ENCODE measurements at regions of chr10 and their contacts with region 1.

Region 1: GRCh38 chr10:4512671-4513240 is 313.3 kb upstream of the AKR1E2 start:
- DNase-seq: peak; percentile 70
- H3K4me3 ChIP-seq: no peak overlapping the region
- H3K27ac ChIP-seq: no peak overlapping the region
- H3K4me1 ChIP-seq: peaks cover 5% of the 10 kb centered on the region
- H3K27me3 ChIP-seq: no peaks in the 10 kb centered on the region
- CTCF ChIP-seq: peak; percentile 79 to 85

Region 2: GRCh38 chr10:3197348-3198003 is 1315.3 kb before region 1 on chr10:
- CTCF ChIA-PET with region 1: no interaction called
- dilution Hi-C with region 1: no loop called
- in situ Hi-C with region 1: no loop called
- intact Hi-C with region 1: loop called (anchors 10 kb)
- DNase-seq: peak; percentile 77
- H3K4me3 ChIP-seq: peak overlapping the region; percentile 28 to 45 (median 30)
- H3K27ac ChIP-seq: no peak overlapping the region
- H3K4me1 ChIP-seq: peaks cover 16% of the 10 kb centered on the region
- H3K27me3 ChIP-seq: peaks cover 12% of the 10 kb centered on the region
- CTCF ChIP-seq: peak; percentile 71 to 98

Region 3: GRCh38 chr10:3239066-3239919 is 1273.5 kb before region 1 on chr10:
- CTCF ChIA-PET with region 1: no interaction called
- dilution Hi-C with region 1: no loop called
- in situ Hi-C with region 1: no loop called
- intact Hi-C with region 1: loop called (anchors 5 kb)
- DNase-seq: peak; percentile 26
- H3K4me3 ChIP-seq: no peak overlapping the region
- H3K27ac ChIP-seq: no peak overlapping the region
- H3K4me1 ChIP-seq: no peaks in the 10 kb centered on the region
- H3K27me3 ChIP-seq: no peaks in the 10 kb centered on the region
- CTCF ChIP-seq: peak; percentile 73 to 83

Region 4: DNA sequence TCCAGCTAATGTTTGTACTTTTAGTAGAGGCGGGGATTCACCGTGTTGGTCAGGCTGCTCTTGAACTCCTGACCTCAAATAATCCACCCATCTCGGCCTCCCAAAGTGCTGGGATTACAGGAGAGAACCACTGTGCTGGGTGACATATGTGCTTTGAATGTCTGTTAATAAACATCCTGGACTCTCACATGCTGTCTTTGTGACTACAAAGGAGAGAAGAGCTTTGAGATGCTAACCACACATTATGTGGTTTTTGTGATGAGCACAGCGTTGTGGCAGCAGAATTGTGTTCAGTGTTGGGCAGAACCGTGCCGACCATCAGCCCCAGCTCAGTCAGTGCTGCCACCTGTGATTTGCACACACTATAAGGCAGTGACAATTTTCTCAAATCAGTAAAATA is 227.6 kb before region 1 on chr10:
- CTCF ChIA-PET with region 1: interaction called, 18 read pairs
- dilution Hi-C with region 1: no loop called
- in situ Hi-C with region 1: no loop called
- intact Hi-C with region 1: no loop called
- DNase-seq: no peak
- H3K4me3 ChIP-seq: no peak overlapping the region
- H3K27ac ChIP-seq: no peak overlapping the region
- H3K4me1 ChIP-seq: peaks cover 12% of the 10 kb centered on the region
- H3K27me3 ChIP-seq: no peaks in the 10 kb centered on the region
- CTCF ChIP-seq: no peak

Region 5: GRCh38 chr10:4541292-4541691 is 28.5 kb after region 1 on chr10:
- CTCF ChIA-PET with region 1: no interaction called
- dilution Hi-C with region 1: no loop called
- in situ Hi-C with region 1: no loop called
- intact Hi-C with region 1: loop called (anchors 1 kb)
- DNase-seq: peak; percentile 97
- H3K4me3 ChIP-seq: no peak overlapping the region
- H3K27ac ChIP-seq: peak overlapping the region; percentile 98
- H3K4me1 ChIP-seq: peaks cover 20% of the 10 kb centered on the region
- H3K27me3 ChIP-seq: no peaks in the 10 kb centered on the region
- CTCF ChIP-seq: peak; percentile 11 to 54

Region 6: GRCh38 chr10:4555920-4556319 is 43.2 kb after region 1 on chr10:
- CTCF ChIA-PET with region 1: no interaction called
- dilution Hi-C with region 1: no loop called
- in situ Hi-C with region 1: no loop called
- intact Hi-C with region 1: no loop called
- DNase-seq: no peak
- H3K4me3 ChIP-seq: no peak overlapping the region
- H3K27ac ChIP-seq: no peak overlapping the region
- H3K4me1 ChIP-seq: no peaks in the 10 kb centered on the region
- H3K27me3 ChIP-seq: no peaks in the 10 kb centered on the region
- CTCF ChIP-seq: no peak

Region 7: DNA sequence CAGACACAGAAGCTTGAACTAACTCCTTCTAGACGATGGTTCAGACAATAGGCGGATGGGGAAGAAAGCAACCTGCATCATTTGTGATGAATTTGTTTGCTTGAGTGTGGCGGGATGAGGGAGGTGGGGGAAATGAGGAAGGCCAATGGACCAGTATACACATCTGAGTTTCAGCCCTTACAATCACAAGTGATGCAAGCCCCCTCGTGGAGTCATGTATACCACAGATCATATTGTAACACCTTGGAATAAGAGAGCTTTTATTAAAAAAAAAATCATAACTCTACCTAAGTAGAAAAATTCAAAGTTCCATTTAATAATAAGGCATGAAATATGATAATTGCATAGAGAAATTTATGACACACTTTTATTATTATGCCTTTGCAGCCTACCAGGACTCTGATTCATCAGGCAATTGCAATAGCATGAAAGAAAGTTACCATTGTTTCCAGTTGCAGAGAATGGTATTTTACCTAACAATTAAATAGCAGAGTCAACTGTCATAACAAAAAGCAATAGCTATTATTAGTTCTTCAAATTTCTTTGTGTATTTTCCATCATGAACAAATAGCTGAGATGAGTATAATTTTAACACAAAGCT is 83.1 kb after region 1 on chr10:
- CTCF ChIA-PET with region 1: no interaction called
- dilution Hi-C with region 1: no loop called
- in situ Hi-C with region 1: no loop called
- intact Hi-C with region 1: loop called (anchors 2 kb)
- DNase-seq: peak; percentile 71
- H3K4me3 ChIP-seq: no peak overlapping the region
- H3K27ac ChIP-seq: peak overlapping the region; percentile 26
- H3K4me1 ChIP-seq: peaks cover 9% of the 10 kb centered on the region
- H3K27me3 ChIP-seq: no peaks in the 10 kb centered on the region
- CTCF ChIP-seq: no peak

Measured in mammary epithelial cell (primary cell).